Activated CD4-positive, alpha-beta memory T cell treated with anti-CD3 and anti-CD28 coated beads, Interleukin-2, amount 10 ng/mL, durations not matched to agents 7 days and 5 days (primary cell): ENCODE measurements at regions of chr1 and their contacts with region 1.

Region 1: DNA sequence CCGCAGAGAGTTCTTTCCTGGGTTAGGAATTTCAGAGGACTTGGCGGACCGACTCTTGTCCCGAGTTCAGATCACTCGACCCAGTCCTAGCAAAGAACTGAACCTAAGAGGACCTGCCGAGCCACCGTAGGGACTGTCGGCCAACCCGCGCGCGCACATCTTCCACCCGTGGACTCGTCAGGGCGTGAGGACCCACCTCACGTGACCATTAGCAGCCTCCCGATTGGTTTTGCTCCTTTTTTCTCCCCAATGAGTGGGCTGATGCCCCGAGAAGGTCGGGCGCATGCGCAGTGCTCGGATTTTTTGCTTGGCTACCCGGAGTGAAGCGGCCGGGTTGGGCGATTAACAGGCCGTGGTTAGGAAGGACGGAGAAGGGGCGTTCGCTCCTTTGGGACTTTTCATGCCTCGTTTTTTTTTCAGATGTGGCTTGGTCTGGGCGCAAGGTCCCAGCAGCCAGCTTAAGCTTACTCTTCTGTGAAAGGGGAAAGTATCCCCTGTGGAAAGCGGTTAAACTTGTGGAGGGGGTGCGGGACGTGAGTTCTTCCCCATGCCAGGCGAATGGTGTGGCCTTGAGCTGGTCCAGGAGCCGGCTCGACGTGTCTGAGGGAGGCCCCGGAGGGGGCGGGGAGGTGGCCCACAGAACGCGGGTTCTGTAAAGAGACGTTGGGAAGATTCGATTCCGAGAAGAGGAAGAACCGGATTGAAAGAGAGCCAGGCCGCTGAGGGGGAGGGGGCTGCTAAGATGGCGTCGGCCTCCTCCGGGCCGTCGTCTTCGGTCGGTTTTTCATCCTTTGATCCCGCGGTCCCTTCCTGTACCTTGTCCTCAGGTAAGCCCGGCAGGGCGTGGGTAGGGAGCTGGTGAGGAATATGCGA is at the start of gene PIP5K1A:
- DNase-seq: peak; percentile 99
- H3K4me3 Mint-ChIP-seq: peak within 1 kb of the TSS; percentile 89
- H3K27ac Mint-ChIP-seq: peak within 1 kb of the TSS; percentile 84
- H3K4me1 Mint-ChIP-seq: peaks cover 43% of the 10 kb centered on the region
- H3K27me3 Mint-ChIP-seq: peaks cover 7% of the 10 kb centered on the region
- total RNA-seq, gene PIP5K1A: 53.9 to 61.1 TPM

Region 2: DNA sequence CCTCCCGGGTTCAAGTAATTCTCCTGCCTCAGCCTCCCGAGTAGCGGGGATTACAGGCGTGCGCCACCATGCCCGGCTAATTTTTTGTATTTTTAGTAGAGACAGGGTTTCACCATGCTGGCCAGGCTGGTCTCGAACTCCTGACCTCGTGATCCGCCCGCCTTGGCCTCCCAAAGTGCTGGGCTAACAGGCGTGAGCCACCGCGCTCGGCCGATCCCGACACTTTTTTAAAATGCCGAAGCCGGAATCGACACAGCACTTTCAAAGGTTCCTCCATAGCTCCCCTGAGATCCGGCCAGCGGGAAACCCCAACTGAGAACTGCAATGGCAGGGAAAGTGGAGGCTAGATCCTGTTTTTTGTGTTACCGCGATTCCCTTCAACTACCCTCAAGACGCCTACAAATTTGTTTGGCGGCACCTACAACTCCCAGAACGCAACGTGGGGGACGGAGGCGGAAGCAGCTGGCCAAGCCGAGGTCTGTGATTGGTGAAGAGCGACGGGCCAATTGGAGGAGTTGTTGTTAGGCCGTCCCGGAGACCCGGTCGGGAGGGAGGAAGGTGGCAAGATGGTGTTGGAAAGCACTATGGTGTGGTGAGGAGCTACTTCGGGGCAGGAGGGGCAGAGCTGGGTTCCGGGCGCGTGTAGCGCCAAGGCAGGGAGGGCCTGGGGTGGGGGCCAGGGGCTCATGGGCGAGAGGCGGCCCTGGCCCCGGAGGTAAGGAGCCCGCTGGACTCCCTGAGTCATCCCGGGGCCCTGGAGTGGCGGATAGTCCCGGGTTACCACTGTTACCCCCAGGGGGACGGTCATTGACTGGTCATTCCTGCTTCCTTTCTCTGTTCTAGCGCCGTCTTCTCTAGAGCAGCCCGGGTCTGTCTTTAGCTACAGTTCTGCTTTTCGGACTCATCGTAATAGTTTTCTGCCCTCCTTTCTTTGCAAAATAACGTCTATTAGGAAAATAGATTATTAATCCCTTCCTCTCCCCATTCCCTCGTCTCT is 56.0 kb after region 1 on chr1 and contains the start of gene PSMD4:
- CTCF ChIA-PET with region 1: interaction called, 9 read pairs
- POLR2A ChIA-PET with region 1: interaction called, 10 read pairs
- DNase-seq: peak; percentile 95
- H3K4me3 Mint-ChIP-seq: peak within 1 kb of the TSS; percentile 87
- H3K27ac Mint-ChIP-seq: peak within 1 kb of the TSS; percentile 83
- H3K4me1 Mint-ChIP-seq: peaks cover 29% of the 10 kb centered on the region
- H3K27me3 Mint-ChIP-seq: no peaks in the 10 kb centered on the region
- total RNA-seq, gene PSMD4: 178 to 188 TPM